Naive thymus-derived CD8-positive, alpha-beta T cell (primary cell): ENCODE measurements at regions of chr16 and their contacts with region 1.

Region 1: DNA sequence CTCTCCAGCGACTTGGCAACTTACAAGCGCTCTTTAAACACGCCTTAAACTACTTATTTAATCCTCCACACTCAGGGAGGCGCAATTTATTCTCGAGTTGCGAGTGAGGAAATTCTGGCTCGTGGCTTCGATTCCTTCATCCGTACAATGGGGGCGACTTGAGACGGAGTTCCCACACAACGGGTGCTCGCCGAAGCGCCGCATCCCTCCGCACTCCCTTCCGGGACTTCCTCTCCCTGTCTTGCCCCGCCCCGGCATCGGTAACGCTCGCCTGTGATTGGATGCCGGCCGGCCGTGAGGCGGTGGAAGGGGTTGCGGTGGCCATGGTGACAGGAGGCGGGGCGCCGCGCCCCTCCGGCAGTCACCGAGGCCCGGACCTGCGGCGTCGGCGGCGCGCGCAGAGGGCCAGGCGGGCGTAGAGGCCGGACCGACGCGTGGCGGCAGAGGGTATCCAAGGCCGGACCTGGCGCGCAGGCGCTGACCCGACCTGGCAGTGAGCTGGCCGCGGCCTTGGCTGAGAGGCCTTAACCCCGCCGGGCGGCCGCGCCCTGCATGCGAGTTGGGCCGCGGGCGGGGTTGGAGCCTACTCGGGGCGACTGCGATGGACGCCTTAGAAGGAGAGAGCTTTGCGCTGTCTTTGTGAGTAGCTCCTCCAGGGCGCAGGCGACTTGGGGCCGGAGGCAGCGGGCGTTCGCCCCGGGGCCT is at the start of gene ARL2BP:
- DNase-seq: peak; percentile 95 to 98 (median 97)
- ATAC-seq: peak; percentile 92 to 96
- H3K4me3 Mint-ChIP-seq: peak within 1 kb of the TSS; percentile 87 to 96 (median 94)
- H3K27ac Mint-ChIP-seq: peak within 1 kb of the TSS; percentile 93 to 97 (median 96)
- H3K4me1 Mint-ChIP-seq: peaks cover 11 to 33% (median 21%) of the 10 kb centered on the region in 4 donors
- H3K27me3 Mint-ChIP-seq: no peaks in the 10 kb centered on the region
- polyA plus RNA-seq, gene ARL2BP: 148 to 154 (median 153) TPM

Region 2: GRCh38 chr16:57300387-57301125 is 55.6 kb after region 1 on chr16:
- POLR2A ChIA-PET with region 1: interaction called, 17 read pairs
- DNase-seq: peak; percentile 92 to 100 (median 99)
- ATAC-seq: peak; percentile 86
- H3K4me3 Mint-ChIP-seq: no peak overlapping the region
- H3K27ac Mint-ChIP-seq: no peak overlapping the region
- H3K4me1 Mint-ChIP-seq: peaks cover 4 to 18% (median 15%) of the 10 kb centered on the region in 4 donors
- H3K27me3 Mint-ChIP-seq: no peaks in the 10 kb centered on the region

Region 3: GRCh38 chr16:57394444-57394843 is 149.5 kb after region 1 on chr16:
- POLR2A ChIA-PET with region 1: no interaction called
- DNase-seq: no peak
- ATAC-seq: no peak
- H3K4me3 Mint-ChIP-seq: no peak overlapping the region
- H3K27ac Mint-ChIP-seq: no peak overlapping the region
- H3K4me1 Mint-ChIP-seq: no peaks in the 10 kb centered on the region
- H3K27me3 Mint-ChIP-seq: peaks cover 0 to 5% (median 2%) of the 10 kb centered on the region in 5 donors